Caco-2 (cell line): ENCODE measurements at regions of chr12 and their contacts with region 1.

Region 1: GRCh38 chr12:45990468-45991283 is at the start of gene SCAF11:
- DNase-seq: peak; percentile 100
- H3K4me3 ChIP-seq: peak within 1 kb of the TSS; percentile 92
- H3K4me3 Mint-ChIP-seq: peak within 1 kb of the TSS; percentile 90
- H3K27ac Mint-ChIP-seq: peak within 1 kb of the TSS; percentile 88
- H3K4me1 ChIP-seq: peaks cover 32% of the 10 kb centered on the region
- H3K4me1 Mint-ChIP-seq: peaks cover 23% of the 10 kb centered on the region
- H3K27me3 ChIP-seq: no peaks in the 10 kb centered on the region
- H3K27me3 Mint-ChIP-seq: no peaks in the 10 kb centered on the region
- CTCF ChIP-seq: peak; percentile 95 to 97
- total RNA-seq, gene SCAF11: 285 and 292 TPM in 2 replicates

Region 2: DNA sequence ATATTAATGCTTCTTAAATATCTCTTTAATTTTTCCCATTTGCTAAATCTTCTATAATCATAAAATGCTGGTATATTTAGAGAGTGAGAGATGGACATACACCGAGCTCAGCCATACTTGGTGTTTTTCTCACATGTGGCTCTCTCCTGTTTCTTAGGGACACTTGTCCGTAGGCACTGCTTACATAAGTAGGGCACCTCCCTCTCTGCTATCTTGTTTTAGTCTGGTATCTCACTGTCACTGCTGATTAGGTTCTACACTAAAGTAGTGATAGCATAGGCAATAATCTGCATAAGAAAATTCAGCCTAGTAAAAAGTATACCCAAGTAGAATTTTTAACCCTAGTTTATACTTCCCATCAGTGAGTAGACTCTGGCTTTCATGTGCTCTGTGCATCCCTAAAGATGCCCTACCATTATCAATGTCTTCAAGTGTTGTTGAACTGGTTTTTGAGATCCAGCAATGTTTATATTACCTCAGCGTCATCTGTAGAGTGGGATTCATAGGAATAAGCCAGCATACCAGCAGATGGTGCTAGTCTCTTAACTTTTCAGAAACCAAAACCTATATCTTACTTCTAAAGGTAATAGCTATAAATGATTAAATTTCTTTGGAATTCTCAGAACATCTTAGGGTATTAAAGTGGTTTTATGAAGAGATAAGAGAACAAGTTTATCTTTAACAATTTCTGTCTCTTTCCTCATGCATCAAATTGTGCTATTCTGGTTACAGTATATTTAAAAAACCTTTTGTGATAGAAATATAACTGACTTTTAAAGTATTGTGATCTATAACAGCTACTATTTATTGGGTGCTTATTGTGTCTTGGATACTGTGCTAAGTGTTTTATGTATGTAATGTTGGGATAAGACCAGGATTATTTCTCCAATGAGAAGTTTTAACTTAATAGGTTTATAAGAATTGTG is 228.2 kb before region 1 on chr12:
- CTCF ChIA-PET with region 1: no interaction called
- POLR2A ChIA-PET with region 1: no interaction called
- intact Hi-C with region 1: loop called (anchors 10 kb)
- DNase-seq: peak; percentile 51 to 70
- H3K4me3 ChIP-seq: no peak overlapping the region
- H3K4me3 Mint-ChIP-seq: no peak overlapping the region
- H3K27ac Mint-ChIP-seq: peak overlapping the region; percentile 45
- H3K4me1 ChIP-seq: peaks cover 13% of the 10 kb centered on the region
- H3K4me1 Mint-ChIP-seq: peaks cover 13% of the 10 kb centered on the region
- H3K27me3 ChIP-seq: no peaks in the 10 kb centered on the region
- H3K27me3 Mint-ChIP-seq: no peaks in the 10 kb centered on the region
- CTCF ChIP-seq: peak; percentile 65 to 87

Region 3: DNA sequence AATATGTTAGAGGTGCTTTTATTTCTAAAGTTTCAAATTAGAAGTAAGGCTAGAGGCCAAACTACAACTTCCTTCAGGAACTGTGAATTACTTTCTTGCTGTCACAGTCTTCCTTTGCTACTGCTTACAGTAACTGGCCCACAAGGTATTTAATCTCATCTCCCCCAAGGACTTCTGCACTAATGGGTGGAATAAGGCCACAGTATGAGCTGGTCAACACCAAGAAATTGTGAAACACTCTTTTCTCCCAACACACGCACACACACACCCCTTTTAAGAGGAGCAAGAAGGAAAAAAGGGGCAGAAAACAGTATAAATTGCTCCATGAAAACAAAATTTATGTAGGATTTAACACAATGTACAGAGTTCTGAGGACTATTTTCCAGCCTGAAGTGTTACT is 45.9 kb before region 1 on chr12:
- CTCF ChIA-PET with region 1: no interaction called
- POLR2A ChIA-PET with region 1: no interaction called
- intact Hi-C with region 1: no loop called
- DNase-seq: no peak
- H3K4me3 ChIP-seq: no peak overlapping the region
- H3K4me3 Mint-ChIP-seq: no peak overlapping the region
- H3K27ac Mint-ChIP-seq: no peak overlapping the region
- H3K4me1 ChIP-seq: no peaks in the 10 kb centered on the region; the same call in 1 of the 2 replicates
- H3K4me1 Mint-ChIP-seq: peaks cover 21% of the 10 kb centered on the region
- H3K27me3 ChIP-seq: no peaks in the 10 kb centered on the region
- H3K27me3 Mint-ChIP-seq: no peaks in the 10 kb centered on the region
- CTCF ChIP-seq: no peak

Region 4: DNA sequence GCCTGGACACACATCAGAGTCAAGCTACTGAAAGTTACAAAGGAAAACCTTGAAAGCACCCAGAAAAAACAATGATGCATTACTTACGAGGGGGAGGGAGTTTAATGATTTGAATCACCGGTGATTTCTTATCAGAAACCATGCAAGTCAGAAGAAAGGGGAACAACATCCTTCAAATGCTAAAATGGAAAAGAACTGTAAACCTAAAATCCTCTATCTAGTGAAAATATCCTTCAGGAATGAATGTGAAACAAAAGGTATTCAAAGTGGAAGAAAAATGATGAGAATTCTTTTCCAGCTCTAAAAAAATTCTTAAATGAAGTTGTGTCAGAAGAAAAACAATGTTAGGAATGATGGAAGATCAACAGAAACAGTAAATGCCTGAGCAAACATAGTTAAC is 17.1 kb before region 1 on chr12:
- CTCF ChIA-PET with region 1: no interaction called
- POLR2A ChIA-PET with region 1: interaction called, 5 read pairs
- intact Hi-C with region 1: loop called (anchors 1 kb)
- DNase-seq: peak in 1 of 2 experiments; percentile 36
- H3K4me3 ChIP-seq: no peak overlapping the region
- H3K4me3 Mint-ChIP-seq: peak overlapping the region; percentile 62
- H3K27ac Mint-ChIP-seq: peak overlapping the region; percentile 51
- H3K4me1 ChIP-seq: peaks cover 88% of the 10 kb centered on the region
- H3K4me1 Mint-ChIP-seq: peaks cover 71% of the 10 kb centered on the region
- H3K27me3 ChIP-seq: no peaks in the 10 kb centered on the region
- H3K27me3 Mint-ChIP-seq: no peaks in the 10 kb centered on the region
- CTCF ChIP-seq: no peak

Region 5: DNA sequence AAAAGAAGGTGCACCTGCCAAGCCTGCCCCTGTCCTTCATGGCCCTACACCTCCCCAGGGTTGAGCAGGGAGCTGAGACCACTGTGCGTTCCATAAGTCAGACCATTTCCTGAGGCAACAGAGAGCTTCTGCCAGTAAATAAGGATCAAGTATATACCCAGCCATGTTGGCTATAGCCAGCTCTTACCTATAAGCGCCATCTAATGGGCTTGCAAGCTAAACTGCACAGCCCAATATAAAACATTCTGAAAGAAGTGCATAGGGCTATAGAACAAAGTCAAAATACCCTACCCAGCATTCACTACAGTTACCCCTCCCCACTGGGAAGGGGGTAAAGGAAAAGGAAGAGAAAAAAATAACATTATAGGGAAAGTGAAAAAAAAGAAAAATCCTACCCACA is 59.0 kb after region 1 on chr12:
- CTCF ChIA-PET with region 1: no interaction called
- POLR2A ChIA-PET with region 1: no interaction called
- intact Hi-C with region 1: loop called (anchors 5 kb)
- DNase-seq: no peak
- H3K4me3 ChIP-seq: no peak overlapping the region
- H3K4me3 Mint-ChIP-seq: no peak overlapping the region
- H3K27ac Mint-ChIP-seq: no peak overlapping the region
- H3K4me1 ChIP-seq: no peaks in the 10 kb centered on the region
- H3K4me1 Mint-ChIP-seq: no peaks in the 10 kb centered on the region
- H3K27me3 ChIP-seq: no peaks in the 10 kb centered on the region; the same call in 1 of the 2 replicates
- H3K27me3 Mint-ChIP-seq: no peaks in the 10 kb centered on the region
- CTCF ChIP-seq: no peak

Region 6: DNA sequence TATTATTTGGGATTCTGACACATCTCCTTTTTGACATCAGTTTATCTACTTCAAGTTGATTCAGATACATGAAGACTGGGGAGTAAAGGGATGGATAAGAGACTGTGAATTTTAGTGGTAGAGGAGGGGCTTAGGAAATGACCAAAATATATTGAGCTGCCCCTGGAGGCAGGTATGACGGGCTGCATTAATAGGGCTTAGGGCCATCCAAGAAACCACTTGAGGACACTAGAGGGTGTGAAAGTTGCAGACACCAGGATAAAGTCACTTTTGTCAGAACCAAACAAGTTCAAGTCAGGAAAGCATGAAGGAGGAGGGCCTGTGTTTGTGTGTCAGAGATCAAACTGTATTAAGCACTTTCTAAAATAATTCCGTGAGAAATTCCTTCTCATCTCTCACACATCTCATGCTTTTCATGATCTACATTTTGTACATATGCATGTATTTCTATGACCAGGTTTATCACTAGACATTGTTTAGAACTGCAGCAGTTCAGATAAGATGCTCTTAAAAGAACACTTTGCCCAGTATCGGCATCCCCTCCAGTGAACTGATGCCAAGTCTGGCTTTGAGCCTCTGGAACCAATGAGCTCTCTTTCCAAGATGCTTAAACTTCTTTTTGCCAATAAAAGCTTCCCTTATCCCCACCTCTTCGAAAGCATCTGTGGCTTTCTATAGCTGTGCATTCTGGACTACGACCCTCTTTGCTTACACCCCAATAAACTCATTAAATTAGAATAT is 141.2 kb after region 1 on chr12:
- CTCF ChIA-PET with region 1: no interaction called
- POLR2A ChIA-PET with region 1: no interaction called
- intact Hi-C with region 1: loop called (anchors 2 kb)
- DNase-seq: peak; percentile 49 to 60
- H3K4me3 ChIP-seq: no peak overlapping the region
- H3K4me3 Mint-ChIP-seq: no peak overlapping the region
- H3K27ac Mint-ChIP-seq: no peak overlapping the region
- H3K4me1 ChIP-seq: peaks cover 18% of the 10 kb centered on the region
- H3K4me1 Mint-ChIP-seq: peaks cover 25% of the 10 kb centered on the region
- H3K27me3 ChIP-seq: no peaks in the 10 kb centered on the region
- H3K27me3 Mint-ChIP-seq: peaks cover 5% of the 10 kb centered on the region
- CTCF ChIP-seq: peak; percentile 32 to 78

Region 7: DNA sequence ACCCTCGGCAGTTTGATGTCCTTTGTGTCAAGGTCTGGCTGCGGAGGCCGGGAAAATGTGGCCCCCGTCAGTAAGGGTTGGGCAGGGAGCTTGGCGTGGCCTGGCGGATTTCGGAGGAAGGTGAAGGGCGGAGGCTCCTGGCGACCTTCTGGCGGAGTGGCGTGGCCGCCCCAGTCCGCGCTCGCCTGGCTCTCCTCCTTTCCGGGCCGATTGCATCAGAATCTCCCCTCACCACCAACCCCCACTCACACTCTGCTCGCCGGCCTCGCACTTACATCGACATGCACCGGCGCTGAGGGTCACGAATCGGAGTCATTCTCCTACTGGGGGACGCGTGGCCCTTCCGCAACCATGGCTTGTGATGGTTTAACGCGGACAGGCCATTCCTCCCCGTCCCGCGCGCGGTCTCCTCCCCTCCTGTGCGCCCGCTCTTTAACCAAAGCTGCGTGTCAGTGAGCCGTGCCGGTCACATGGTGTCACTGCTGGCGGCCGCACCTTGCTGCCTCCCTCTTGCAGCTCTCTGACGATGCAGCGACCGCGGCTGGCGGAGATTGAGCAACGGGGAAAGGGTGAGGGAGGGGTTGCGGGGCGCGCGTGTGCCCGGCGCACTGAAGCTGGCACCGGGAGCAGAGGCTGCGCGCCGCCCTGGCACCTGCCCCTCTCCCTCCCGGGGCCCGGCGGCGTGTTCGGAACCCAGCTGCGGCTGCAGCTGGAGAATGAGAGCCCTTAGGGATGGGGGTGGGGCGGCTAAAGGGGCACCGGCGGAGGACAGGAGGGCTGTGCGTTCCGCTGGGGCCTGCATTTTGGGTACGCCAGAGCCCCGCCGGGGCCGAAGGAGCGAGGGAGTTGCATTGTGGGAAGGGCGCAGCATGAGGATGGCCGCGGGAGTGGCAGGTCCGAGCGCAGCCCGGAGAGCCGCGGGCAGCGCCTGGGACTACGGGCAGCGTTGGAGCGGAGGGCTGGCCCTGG is 278.2 kb after region 1 on chr12 and contains the start of gene SLC38A1:
- CTCF ChIA-PET with region 1: no interaction called
- POLR2A ChIA-PET with region 1: interaction called, 3 read pairs
- intact Hi-C with region 1: loop called (anchors 2 kb)
- DNase-seq: peak; percentile 94 to 95
- H3K4me3 ChIP-seq: peak within 1 kb of the TSS; percentile 78
- H3K4me3 Mint-ChIP-seq: no peak within 1 kb of the TSS
- H3K27ac Mint-ChIP-seq: no peak within 1 kb of the TSS
- H3K4me1 ChIP-seq: peaks cover 33% of the 10 kb centered on the region
- H3K4me1 Mint-ChIP-seq: no peaks in the 10 kb centered on the region
- H3K27me3 ChIP-seq: no peaks in the 10 kb centered on the region
- H3K27me3 Mint-ChIP-seq: no peaks in the 10 kb centered on the region
- CTCF ChIP-seq: no peak
- total RNA-seq, gene SLC38A1: 245 and 259 TPM in 2 replicates

Region 8: DNA sequence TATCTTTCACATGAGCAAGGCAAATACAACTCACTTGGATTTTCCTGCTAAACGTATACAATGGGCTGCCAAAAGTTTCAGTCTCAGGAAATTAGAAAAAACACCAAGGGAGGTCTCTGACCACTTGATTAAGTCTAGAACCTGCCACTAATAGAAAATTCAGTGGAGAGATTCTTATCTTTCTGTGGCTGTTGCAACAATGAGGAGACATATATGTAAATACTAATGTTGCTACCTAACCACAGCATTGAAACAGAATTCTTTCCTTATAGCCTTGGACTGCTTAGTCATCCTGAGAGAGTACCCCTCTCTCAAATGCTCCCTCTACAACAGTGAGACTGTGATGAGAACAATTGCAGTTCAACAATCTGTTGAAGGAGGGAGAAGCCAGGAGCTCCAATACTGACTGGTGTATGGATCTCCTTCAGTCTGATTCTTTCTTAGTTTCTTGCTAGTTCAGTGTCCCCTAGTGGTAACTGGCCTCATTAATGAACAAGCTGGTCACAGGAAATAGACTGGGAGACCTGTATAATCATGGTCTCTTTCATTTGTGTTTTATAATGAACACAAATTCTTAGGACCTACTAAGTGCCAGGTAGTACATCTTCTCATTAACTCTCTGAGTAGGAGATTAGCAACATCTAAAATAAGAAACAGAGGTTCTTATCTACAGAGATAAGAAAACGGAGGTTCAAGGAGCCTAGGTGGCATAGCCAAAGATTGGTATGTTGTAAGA is 670.6 kb after region 1 on chr12:
- CTCF ChIA-PET with region 1: interaction called, 4 read pairs
- POLR2A ChIA-PET with region 1: no interaction called
- intact Hi-C with region 1: loop called (anchors 5 kb)
- DNase-seq: peak in 1 of 2 experiments; percentile 72
- H3K4me3 ChIP-seq: no peak overlapping the region
- H3K4me3 Mint-ChIP-seq: no peak overlapping the region
- H3K27ac Mint-ChIP-seq: no peak overlapping the region
- H3K4me1 ChIP-seq: peaks cover 16% of the 10 kb centered on the region
- H3K4me1 Mint-ChIP-seq: peaks cover 26% of the 10 kb centered on the region
- H3K27me3 ChIP-seq: no peaks in the 10 kb centered on the region
- H3K27me3 Mint-ChIP-seq: no peaks in the 10 kb centered on the region
- CTCF ChIP-seq: peak; percentile 76 to 91